Thyroid gland (tissue), 4 donors: ENCODE measurements at regions of chr6 and their contacts with region 1.

Region 1: DNA sequence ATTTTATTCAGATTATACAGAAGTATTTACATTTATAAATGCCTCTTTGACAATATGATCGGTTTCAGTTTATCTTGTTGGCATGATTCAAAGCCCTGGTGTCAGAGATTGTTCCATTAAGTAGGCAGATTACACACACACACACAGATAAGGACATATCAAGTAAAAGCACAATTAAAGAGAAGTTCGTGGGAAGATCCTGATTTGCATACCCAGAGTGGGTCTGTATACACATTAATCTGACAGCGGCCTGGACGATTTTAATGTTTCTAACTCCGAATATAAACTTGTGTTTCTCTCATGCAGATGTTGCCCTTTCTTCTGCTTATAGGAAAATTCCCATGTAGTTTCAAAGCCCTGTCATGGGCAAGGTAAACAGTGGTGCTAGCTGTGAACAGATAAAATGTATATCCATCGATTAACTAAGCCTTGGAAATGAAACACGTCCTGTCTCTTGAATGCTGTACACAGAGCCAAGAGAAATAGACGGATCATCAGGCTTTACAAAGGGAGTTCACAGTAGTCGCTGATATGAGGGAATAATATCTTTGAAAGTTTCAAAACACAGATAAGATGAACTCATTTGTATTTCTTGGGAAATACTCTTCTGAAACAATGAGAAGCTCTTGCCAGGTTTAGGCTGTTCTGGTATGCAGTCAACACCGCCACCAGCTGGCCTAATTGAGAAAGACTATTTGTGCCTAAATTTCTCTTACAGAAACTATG is 108.2 kb upstream of the GMDS start:
- DNase-seq: peak; percentile 65 to 73
- H3K4me3 ChIP-seq: no peak overlapping the region
- H3K27ac ChIP-seq: no peak overlapping the region
- H3K4me1 ChIP-seq: no peaks in the 10 kb centered on the region
- H3K27me3 ChIP-seq: no peaks in the 10 kb centered on the region
- CTCF ChIP-seq: peak; percentile 42 to 86 (median 74)
- POLR2A ChIP-seq: no peak

Region 2: DNA sequence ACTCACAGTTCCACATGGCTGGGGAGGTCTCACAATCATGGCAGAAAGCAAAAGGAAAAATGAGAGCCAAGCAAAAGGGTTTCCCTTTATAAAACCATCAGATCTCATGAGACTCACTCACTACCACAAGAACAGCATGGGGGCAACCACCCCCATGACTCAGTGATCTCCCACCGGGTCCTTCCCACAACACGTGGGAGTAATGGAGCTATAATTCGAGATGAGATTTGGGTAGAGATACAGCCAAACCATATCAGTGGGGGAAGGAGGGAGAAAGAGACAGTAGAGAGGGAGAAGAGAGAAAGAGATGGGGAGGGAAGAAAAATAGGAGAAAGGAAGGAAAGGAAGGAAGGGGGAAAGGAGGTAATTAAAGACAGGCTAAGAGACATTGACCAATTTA is 138.2 kb before region 1 on chr6:
- intact Hi-C with region 1: loop called (anchors 10 kb)
- DNase-seq: no peak
- H3K4me3 ChIP-seq: no peak overlapping the region
- H3K27ac ChIP-seq: no peak overlapping the region
- H3K4me1 ChIP-seq: peaks cover 4 to 7% of the 10 kb centered on the region in 2 donors
- H3K27me3 ChIP-seq: no peaks in the 10 kb centered on the region
- CTCF ChIP-seq: no peak
- POLR2A ChIP-seq: no peak